Cardiac septum (tissue), 1 donor: ENCODE measurements at regions of chr12 and their contacts with region 1.

Region 1: DNA sequence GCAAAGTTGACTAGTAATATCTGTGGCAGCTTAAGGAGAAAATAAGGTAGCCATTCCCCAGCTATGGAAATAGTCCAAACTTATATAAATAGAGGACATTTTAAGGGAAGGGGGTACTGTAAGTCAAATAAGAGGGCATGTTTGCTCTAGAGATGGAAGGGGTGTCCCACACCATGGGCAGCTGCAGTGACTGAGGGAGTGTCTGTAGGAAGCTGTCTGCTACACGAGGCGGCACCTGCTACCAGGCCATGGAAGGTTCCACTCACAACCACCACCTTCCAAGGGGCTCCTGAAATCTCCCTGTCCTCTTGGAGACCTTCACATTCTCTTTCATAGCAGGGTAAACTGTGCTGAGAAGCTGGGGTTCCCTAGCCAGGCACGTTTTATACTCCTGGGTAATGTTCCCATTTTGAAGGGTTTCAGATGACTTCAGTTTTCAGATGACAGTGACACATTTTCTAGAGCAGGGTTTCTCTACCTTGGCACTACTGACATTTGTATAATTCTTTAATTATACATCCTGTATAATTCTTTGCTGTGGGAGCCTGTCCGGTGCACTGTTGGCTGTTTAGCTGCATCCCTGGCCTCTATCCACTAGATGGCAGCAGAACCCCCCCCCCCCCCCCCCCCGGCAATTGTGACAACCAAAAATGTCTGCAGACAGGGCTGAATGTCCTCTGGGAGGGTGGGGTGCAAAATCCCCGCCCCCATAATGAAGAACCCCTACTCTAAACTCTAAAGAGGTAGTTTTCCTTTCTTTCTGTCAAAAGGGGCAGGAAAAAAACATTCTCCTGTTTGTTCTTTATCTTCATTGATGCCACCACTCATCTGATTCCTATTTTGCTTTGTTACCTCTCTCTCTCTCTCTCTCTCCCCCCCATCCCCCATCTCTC is 11.6 kb upstream of the SMCO2 start:
- DNase-seq: no peak

Region 2: GRCh38 chr12:27474344-27474743 is 39.4 kb after region 1 on chr12:
- intact Hi-C with region 1: no loop called
- DNase-seq: no peak

Region 3: GRCh38 chr12:27635349-27635972 is 200.5 kb after region 1 on chr12:
- intact Hi-C with region 1: loop called (anchors 5 kb)
- DNase-seq: no peak

Region 4: DNA sequence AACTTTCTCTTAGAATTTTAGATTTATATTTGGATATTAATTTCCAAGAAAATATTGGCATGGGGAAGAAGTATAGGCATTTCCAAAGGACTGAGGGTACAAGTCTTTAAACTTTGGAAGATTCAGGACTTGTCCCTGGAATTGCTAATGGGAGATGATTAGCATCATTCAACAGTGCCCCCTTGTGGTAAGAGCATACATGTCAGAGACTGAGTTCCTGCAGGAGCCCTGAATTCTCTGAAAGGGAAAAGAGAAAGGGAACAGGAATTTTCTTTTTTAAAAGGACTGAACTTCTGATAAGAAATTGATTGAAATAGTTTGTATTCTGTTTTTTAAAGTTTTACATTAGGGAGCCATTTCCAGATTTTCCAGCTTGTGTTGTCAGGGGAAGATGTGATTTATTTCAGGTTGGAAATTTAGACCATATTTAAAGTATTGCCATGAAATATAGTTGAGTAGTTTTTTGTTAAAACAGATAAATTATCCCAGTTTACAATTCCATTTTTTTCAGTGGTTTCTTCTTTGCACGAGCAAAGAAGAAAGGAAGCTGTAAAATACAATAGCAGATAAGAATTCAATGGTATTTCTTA is 217.3 kb after region 1 on chr12:
- intact Hi-C with region 1: loop called (anchors 2 kb)
- DNase-seq: no peak